ENCODE measurements at regions of chr19 and their contacts with region 1.

Region 1: DNA sequence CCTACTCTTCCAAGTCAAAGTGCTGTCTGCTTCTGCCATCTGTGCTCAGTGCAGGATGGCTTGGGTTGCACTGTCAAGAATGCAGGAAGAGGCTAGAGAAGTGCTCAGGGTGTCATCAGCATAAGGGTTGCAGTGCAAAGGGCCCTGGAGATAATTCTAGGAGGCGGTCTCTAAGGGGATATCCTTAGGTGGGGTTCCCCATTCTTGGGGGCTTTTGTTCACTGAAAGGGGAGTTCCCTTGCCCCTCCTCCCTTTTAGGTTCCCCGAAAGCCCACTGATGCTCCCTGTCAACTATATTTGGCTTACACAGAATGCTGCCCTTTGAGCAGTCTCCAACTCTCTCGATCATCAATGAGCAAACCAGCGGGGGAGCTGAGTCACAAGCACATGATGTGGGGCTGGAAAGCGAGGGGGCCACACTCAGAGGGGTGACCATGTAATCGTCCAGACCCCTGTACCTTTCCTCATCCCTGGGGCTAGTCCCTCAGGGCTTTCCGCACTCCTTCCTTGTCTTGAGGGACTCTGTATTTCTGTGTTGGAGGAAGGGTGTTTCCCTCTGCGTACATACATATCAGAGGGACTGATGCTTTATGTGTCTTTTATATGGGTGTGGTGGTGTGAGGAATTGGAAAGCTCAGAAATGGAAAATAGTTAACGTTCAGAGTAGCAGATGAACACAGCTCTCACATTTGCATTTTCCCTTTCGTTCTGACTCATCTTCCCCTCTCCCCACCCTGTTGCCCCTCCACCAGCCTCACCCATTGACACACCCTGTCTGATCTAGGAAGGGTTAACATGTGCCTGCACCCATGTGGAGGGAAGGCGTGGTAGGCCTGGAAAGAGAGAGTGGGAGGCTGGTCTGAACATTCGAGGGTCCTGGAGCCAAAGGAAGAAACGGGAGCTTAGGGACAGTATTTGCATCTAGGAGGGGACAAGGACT is 6.7 kb downstream of the ZBTB32 start:
- DNase-seq: no peak
- ATAC-seq: no peak
- H3K4me3 ChIP-seq: no peak overlapping the region
- H3K27ac ChIP-seq: no peak overlapping the region
- H3K4me1 ChIP-seq: peaks cover 6 to 9% of the 10 kb centered on the region in 2 donors
- H3K27me3 ChIP-seq: no peaks in the 10 kb centered on the region
- CTCF ChIP-seq: no peak
- POLR2A ChIP-seq: no peak

Region 2: GRCh38 chr19:35775298-35776110 is 64.5 kb after region 1 on chr19 and contains the start of gene ARHGAP33:
- in situ Hi-C with region 1: no loop called
- intact Hi-C with region 1: loop called (anchors 5 kb)
- DNase-seq: peak; percentile 95 to 98
- ATAC-seq: peak; percentile 98
- H3K4me3 ChIP-seq: peak within 1 kb of the TSS; percentile 60 to 81 (median 73)
- H3K27ac ChIP-seq: peak within 1 kb of the TSS; percentile 35 to 69 (median 45)
- H3K4me1 ChIP-seq: peaks cover 4 to 5% of the 10 kb centered on the region in 2 donors
- H3K27me3 ChIP-seq: no peaks in the 10 kb centered on the region
- CTCF ChIP-seq: no peak
- POLR2A ChIP-seq: no peak
- total RNA-seq, gene ARHGAP33: 0.22 to 4.7 (median 2.2) TPM

Measured in gastrocnemius medialis (tissue), 4 donors.